ENCODE measurements at regions of chr11 and their contacts with region 1.

Region 1: GRCh38 chr11:73184953-73185671 is 33.0 kb upstream of the P2RY2 start:
- DNase-seq: peak; percentile 52
- ATAC-seq: peak; percentile 88
- H3K4me3 ChIP-seq: no peak overlapping the region
- H3K27ac ChIP-seq: no peak overlapping the region
- H3K4me1 ChIP-seq: peaks cover 28% of the 10 kb centered on the region
- H3K27me3 ChIP-seq: peaks cover 0 to 22% of the 10 kb centered on the region in 2 experiments; a peak in 2 of 5 replicates
- CTCF ChIP-seq: peak; percentile 96
- EP300 ChIP-seq: no peak
- POLR2A ChIP-seq: no peak
- RAD21 ChIP-seq: peak; percentile 87

Region 2: DNA sequence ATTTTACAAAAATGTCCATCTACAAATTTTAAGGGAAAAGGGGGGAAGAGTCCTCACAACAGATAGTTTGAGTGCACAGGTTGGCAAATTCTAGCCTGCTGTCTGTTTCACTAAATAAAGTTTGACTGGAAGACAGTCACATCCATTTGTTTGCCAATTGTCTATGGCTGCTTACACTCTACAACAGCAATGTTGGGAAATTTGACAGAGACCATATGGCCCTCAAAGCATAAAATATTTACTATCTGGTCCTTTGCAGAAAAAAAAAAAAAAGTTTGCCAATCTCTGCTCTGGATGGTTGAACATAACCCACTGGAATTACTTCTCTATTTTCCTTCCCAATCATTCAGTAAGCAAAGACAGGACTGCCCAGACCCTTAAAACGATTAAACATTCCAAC is 131.1 kb before region 1 on chr11:
- CTCF ChIA-PET with region 1: no interaction called
- POLR2A ChIA-PET with region 1: no interaction called
- in situ Hi-C with region 1: no loop called
- intact Hi-C with region 1: no loop called
- DNase-seq: no peak
- ATAC-seq: no peak
- H3K4me3 ChIP-seq: no peak overlapping the region
- H3K27ac ChIP-seq: no peak overlapping the region
- H3K4me1 ChIP-seq: peaks cover 23% of the 10 kb centered on the region
- H3K27me3 ChIP-seq: no peaks in the 10 kb centered on the region
- CTCF ChIP-seq: no peak
- EP300 ChIP-seq: no peak
- POLR2A ChIP-seq: no peak
- RAD21 ChIP-seq: no peak

Region 3: GRCh38 chr11:73236854-73237253 is 51.7 kb after region 1 on chr11:
- CTCF ChIA-PET with region 1: interaction called, 39 read pairs
- POLR2A ChIA-PET with region 1: no interaction called
- in situ Hi-C with region 1: loop called (anchors 5 kb)
- intact Hi-C with region 1: loop called (anchors 1 kb)
- DNase-seq: peak; percentile 57
- ATAC-seq: peak; percentile 59
- H3K4me3 ChIP-seq: no peak overlapping the region
- H3K27ac ChIP-seq: no peak overlapping the region
- H3K4me1 ChIP-seq: peaks cover 45% of the 10 kb centered on the region
- H3K27me3 ChIP-seq: no peaks in the 10 kb centered on the region
- CTCF ChIP-seq: peak; percentile 79
- EP300 ChIP-seq: no peak
- POLR2A ChIP-seq: no peak
- RAD21 ChIP-seq: no peak

Region 4: DNA sequence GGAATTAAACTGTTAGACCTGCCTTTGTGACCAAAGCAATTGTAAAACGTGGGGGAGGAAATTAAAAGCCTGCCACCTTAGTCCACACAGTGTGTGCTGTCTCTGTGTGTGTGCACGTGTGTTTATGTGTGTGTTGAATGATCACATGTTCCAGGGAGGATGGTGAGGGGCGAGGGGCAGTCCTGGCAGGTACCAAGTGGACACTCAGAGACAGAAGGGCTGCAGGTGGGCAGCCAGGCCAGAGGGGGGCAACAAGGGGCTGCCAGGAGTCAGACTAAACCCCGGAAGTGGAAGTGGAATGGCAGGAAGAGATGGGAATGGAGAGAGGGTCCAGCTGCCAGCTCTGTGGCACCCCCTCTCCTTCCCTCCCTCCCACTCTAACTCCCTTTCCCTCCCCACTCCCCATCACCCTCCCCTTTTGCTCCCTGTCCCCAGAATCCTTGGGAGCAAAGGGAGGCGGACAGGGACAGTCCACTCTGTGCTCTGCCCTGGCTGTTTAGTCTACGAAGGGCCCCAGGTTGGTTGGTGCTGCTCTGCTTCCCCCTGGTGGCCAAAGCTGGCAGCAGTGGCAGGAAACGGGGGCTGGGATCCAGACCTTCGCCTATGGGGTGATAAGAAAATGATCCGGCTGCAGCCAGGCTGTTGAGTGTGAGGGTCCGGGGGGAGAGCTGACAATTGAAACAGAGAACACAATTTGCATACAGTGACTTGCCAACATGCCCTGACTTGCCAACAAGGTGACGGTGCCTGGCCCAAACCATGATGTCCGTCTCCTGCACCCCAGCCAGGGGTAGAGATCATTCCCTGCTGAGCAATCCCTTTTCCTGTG is 57.4 kb after region 1 on chr11:
- CTCF ChIA-PET with region 1: interaction called, 39 read pairs
- POLR2A ChIA-PET with region 1: no interaction called
- in situ Hi-C with region 1: loop called (anchors 5 kb)
- intact Hi-C with region 1: loop called (anchors 1 kb)
- DNase-seq: peak; percentile 76
- ATAC-seq: peak; percentile 82
- H3K4me3 ChIP-seq: peak overlapping the region; percentile 48 to 74 (median 68); a peak in 5 of 6 replicates
- H3K27ac ChIP-seq: no peak overlapping the region
- H3K4me1 ChIP-seq: peaks cover 27% of the 10 kb centered on the region
- H3K27me3 ChIP-seq: no peaks in the 10 kb centered on the region; a peak in 2 of 5 replicates
- CTCF ChIP-seq: peak; percentile 94
- EP300 ChIP-seq: no peak
- POLR2A ChIP-seq: peak; percentile 47 to 54; a peak in 3 of 4 replicates
- RAD21 ChIP-seq: peak; percentile 86

Region 5: DNA sequence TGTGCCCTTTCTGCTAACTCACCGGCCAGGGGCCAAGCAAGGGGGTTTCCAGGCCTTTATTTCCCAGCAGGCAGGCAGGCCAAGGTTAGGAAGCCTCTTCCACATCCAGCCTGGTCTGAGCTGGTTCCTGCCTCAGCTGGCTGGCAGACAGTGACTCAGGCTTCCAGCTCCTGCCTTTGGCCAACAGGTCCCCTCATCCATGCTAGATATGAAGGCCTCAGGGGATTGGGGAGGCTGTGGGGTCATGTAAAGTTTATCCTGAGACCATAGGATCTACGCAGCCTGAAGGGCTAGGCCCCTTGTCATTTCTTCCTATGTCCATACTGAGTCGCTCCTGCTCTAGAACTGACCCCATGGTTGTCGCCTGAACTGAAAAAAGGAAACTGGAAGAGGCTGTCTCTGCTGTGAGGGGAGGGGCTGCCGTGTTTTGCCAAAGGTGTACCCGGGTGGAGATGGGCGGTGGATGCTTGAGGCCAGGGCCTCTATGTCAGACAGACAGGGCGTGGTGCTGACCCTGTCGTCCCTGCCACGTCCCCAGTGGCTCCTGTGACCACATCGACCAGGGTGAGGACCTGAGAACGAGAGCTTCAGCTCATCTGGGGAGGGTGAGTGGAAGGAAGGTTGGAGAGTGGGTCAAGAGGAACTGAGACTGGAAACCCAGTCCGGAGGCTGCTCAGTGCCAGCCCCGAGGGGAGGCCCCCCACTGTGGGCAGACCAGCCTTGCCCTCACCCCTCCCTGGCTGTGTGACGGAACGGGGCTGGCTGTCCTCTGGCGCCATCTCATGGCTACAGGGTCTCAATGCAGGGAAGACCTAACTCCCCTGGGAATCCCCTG is 104.0 kb after region 1 on chr11:
- CTCF ChIA-PET with region 1: interaction called, 28 read pairs
- POLR2A ChIA-PET with region 1: no interaction called
- in situ Hi-C with region 1: loop called (anchors 5 kb)
- intact Hi-C with region 1: loop called (anchors 1 kb)
- DNase-seq: peak; percentile 64
- ATAC-seq: peak; percentile 84
- H3K4me3 ChIP-seq: peak overlapping the region; percentile 55 to 82 (median 64)
- H3K27ac ChIP-seq: no peak overlapping the region
- H3K4me1 ChIP-seq: peaks cover 32% of the 10 kb centered on the region
- H3K27me3 ChIP-seq: peaks cover 6 to 43% of the 10 kb centered on the region in 2 experiments; a peak in 4 of 5 replicates
- CTCF ChIP-seq: peak; percentile 98
- EP300 ChIP-seq: no peak
- POLR2A ChIP-seq: peak in 1 of 2 experiments; percentile 45; a peak in 1 of 4 replicates
- RAD21 ChIP-seq: peak; percentile 96

Measured in HepG2 (cell line).